ENCODE measurements at regions of chr19 and their contacts with region 1.

Region 1: DNA sequence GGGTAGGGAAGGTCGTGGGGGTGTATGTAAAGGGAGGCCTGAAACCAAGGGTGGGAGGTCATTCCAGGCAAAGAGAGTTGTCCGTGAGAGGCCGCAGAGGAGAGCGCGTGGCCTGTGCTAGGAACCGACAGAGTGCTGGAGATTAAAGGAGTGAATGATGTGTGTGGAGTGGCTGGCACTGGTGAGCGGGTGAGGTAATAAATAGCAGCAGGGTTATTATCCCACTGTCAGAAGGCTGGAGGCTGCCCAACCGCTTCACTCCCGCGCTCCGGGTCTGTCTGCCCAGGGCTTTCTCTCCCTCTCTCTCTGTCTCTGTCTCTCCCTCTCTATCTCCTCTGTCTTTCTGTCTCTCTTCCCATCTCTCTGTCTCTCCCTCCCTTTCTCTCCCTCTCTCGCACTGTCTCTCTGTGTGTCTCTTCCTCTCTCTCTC is 17.4 kb downstream of the ZNF579 start:
- DNase-seq: no peak
- H3K4me3 Mint-ChIP-seq: no peak overlapping the region
- H3K27ac Mint-ChIP-seq: no peak overlapping the region
- H3K4me1 Mint-ChIP-seq: no peaks in the 10 kb centered on the region
- H3K27me3 Mint-ChIP-seq: no peaks in the 10 kb centered on the region

Region 2: GRCh38 chr19:55526216-55527196 is 36.8 kb before region 1 on chr19:
- intact Hi-C with region 1: loop called (anchors 5 kb)
- DNase-seq: no peak
- H3K4me3 Mint-ChIP-seq: no peak overlapping the region
- H3K27ac Mint-ChIP-seq: no peak overlapping the region
- H3K4me1 Mint-ChIP-seq: no peaks in the 10 kb centered on the region
- H3K27me3 Mint-ChIP-seq: peaks cover 2% of the 10 kb centered on the region

Region 3: GRCh38 chr19:55536951-55537740 is 26.1 kb before region 1 on chr19 and contains the start of gene SBK2:
- intact Hi-C with region 1: no loop called
- DNase-seq: no peak
- H3K4me3 Mint-ChIP-seq: no peak within 1 kb of the TSS
- H3K27ac Mint-ChIP-seq: no peak within 1 kb of the TSS
- H3K4me1 Mint-ChIP-seq: no peaks in the 10 kb centered on the region
- H3K27me3 Mint-ChIP-seq: no peaks in the 10 kb centered on the region
- total RNA-seq, gene SBK2: not detected in 2 replicates